ENCODE measurements at regions of chr13 and their contacts with region 1.

Region 1: DNA sequence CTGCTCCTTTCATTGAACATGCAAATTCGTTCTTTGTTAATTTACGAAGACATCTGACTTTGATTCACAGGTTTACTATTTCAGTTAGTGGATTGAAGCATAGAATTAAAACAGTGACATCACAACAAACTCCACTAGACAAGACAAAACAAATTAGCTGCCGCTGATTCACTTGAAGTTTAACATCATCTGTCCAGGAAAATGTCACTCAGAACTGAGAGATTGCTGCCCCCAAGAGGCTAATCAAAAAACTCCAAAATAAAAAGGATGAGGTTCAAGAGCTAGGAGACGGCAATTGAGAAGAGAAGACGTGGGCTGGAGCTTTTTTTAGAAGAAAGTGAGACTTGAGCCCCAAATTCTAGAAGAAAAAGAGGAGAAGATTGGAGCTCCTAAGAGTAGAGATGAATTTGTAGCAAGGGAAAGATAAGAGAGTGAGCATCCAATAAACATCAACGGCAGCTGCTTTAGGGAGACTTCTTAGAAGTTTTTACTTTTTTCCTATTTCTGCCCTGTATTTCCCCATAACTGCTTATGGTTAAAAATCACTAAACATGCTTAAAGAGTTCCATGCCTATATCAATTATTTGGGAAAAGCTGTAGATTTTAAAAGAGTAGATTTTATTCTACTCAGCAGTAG is 40.8 kb upstream of the TPP2 start:
- DNase-seq: no peak
- ATAC-seq: peak in 1 of 8 donors; percentile 44
- H3K4me3 ChIP-seq: no peak overlapping the region
- H3K27ac ChIP-seq: no peak overlapping the region
- H3K4me1 ChIP-seq: no peaks in the 10 kb centered on the region
- H3K27me3 ChIP-seq: no peaks in the 10 kb centered on the region
- CTCF ChIP-seq: peak in 7 of 9 donors; percentile 45 to 65 (median 57)

Region 2: DNA sequence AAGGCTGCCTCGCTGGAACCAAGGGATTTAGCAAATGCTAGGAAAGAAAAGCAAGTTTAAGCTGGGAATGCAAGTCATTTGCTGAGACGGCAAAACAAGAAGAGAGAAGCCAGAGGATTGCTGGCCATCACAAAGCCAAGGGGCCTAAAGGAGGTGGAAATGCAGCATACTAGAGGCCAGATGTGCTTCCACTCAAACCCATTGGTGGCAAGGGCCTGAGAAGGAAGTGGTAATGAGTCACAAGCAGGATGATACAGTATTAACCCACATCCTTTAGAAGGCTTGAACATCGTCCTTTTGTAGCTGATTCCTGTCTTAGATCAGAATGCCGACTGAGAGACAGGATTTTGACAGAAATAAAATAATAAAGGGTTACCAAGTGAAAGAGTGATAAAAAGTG is 1035.4 kb before region 1 on chr13:
- intact Hi-C with region 1: loop called in 2 of 10 experiments (anchors 10 kb)
- DNase-seq: no peak
- ATAC-seq: no peak
- H3K4me3 ChIP-seq: no peak overlapping the region
- H3K27ac ChIP-seq: peak overlapping the region in 1 of 10 donors; percentile 20
- H3K4me1 ChIP-seq: peaks cover 0 to 10% (median 0%) of the 10 kb centered on the region in 9 donors
- H3K27me3 ChIP-seq: no peaks in the 10 kb centered on the region
- CTCF ChIP-seq: no peak

Region 3: DNA sequence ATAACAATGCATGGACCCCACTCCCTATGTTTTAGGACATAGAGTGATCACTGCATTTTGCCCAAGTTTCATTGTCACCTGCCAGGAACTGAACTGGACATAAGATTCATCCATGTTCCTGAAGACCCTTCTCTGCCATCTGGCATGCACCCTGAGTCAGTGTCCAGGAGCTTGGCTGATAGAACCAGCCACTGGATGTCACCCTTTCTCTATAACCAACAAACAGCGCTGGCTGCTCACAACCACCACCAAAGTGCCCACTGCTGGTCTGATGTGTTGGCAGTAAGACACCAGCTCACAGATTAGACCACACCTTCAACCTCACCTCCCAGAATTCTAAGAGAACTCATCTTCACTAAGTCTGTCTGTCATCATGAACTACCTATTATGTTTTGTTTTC is 770.2 kb before region 1 on chr13:
- intact Hi-C with region 1: loop called in 2 of 10 experiments (anchors 10 kb)
- DNase-seq: peak; percentile 14 to 21
- ATAC-seq: peak; percentile 42 to 92 (median 81)
- H3K4me3 ChIP-seq: no peak overlapping the region
- H3K27ac ChIP-seq: no peak overlapping the region
- H3K4me1 ChIP-seq: no peaks in the 10 kb centered on the region
- H3K27me3 ChIP-seq: no peaks in the 10 kb centered on the region
- CTCF ChIP-seq: peak in 8 of 9 donors; percentile 19 to 62 (median 48)

Region 4: GRCh38 chr13:101930331-101930730 is 625.7 kb before region 1 on chr13:
- intact Hi-C with region 1: loop called in 1 of 10 experiments (anchors 10 kb)
- DNase-seq: no peak
- ATAC-seq: no peak
- H3K4me3 ChIP-seq: no peak overlapping the region
- H3K27ac ChIP-seq: no peak overlapping the region
- H3K4me1 ChIP-seq: no peaks in the 10 kb centered on the region
- H3K27me3 ChIP-seq: peaks cover 0 to 3% (median 0%) of the 10 kb centered on the region in 7 donors
- CTCF ChIP-seq: no peak

Region 5: DNA sequence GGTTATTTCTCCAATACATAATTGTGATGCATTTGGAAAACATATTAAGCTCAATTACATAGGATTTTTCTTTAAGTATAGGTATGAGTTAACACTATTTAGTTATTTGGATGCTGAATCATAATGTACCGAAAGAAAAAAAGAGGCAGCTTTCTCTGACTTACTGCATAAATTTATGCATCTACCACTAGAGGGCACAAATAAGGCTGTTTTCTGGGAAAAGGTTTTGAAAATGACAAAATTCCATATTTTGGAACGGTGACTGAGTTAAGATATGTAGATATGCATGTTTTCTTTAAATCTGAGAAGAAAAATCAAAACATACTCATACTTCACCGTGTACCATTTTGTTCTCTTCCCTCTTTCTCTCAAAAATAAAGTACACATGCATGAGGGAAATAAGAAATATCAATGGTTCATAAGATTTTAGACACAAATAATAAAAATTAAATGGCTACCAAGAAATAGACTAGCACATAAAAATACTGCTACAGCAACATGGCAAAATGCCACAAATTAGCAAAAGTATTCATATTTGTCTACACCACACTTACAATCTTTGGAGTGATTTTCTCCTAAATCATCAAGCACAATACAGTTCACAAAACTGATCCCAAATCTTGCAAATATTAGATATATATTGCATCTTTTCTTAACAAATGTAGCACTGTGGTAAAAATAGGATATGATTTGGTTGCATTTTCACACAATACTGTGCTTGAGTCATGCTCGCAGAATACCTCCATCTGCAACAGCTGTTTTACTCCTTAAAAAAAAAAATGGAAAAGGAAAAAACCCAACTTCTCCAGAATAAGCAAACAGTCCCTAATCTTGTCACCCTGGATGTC is 414.2 kb before region 1 on chr13:
- intact Hi-C with region 1: loop called in 3 of 10 experiments (anchors 5 to 10 kb)
- DNase-seq: no peak
- ATAC-seq: peak in 3 of 8 donors; percentile 28 to 52 (median 38)
- H3K4me3 ChIP-seq: no peak overlapping the region
- H3K27ac ChIP-seq: peak overlapping the region in 2 of 10 donors; percentile 4 to 9
- H3K4me1 ChIP-seq: peaks cover 0 to 18% (median 0%) of the 10 kb centered on the region in 9 donors
- H3K27me3 ChIP-seq: no peaks in the 10 kb centered on the region
- CTCF ChIP-seq: peak; percentile 45 to 78 (median 65)